Panc1 (cell line): ENCODE measurements at regions of chr10 and their contacts with region 1.

Region 1: GRCh38 chr10:58477122-58477521 is 35.5 kb upstream of the BICC1 start:
- DNase-seq: no peak
- ATAC-seq: no peak
- H3K4me3 ChIP-seq: no peak overlapping the region
- H3K27ac ChIP-seq: no peak overlapping the region
- H3K4me1 ChIP-seq: peaks cover 3% of the 10 kb centered on the region; the same call in 1 of the 2 replicates
- H3K27me3 ChIP-seq: 0 out of 2 replicates have a peak, but pooled peaks cover 3% of the 10 kb centered on the region
- CTCF ChIP-seq: no peak

Region 2: GRCh38 chr10:58925381-58925780 is 448.3 kb after region 1 on chr10:
- CTCF ChIA-PET with region 1: interaction called, 13 read pairs
- POLR2A ChIA-PET with region 1: no interaction called
- in situ Hi-C with region 1: no loop called
- intact Hi-C with region 1: no loop called
- DNase-seq: no peak
- ATAC-seq: no peak
- H3K4me3 ChIP-seq: no peak overlapping the region
- H3K27ac ChIP-seq: no peak overlapping the region
- H3K4me1 ChIP-seq: no peaks in the 10 kb centered on the region
- H3K27me3 ChIP-seq: no peaks in the 10 kb centered on the region
- CTCF ChIP-seq: no peak